ENCODE measurements at regions of chr9 and their contacts with region 1.

Region 1: GRCh38 chr9:79465156-79465555 is 106.6 kb upstream of the TLE4 start:
- DNase-seq: no peak
- ATAC-seq: no peak
- H3K4me3 ChIP-seq: no peak overlapping the region
- H3K4me3 Mint-ChIP-seq: no peak overlapping the region
- H3K27ac ChIP-seq: no peak overlapping the region
- H3K27ac Mint-ChIP-seq: no peak overlapping the region
- H3K4me1 ChIP-seq: peaks cover 8% of the 10 kb centered on the region
- H3K4me1 Mint-ChIP-seq: peaks cover 14% of the 10 kb centered on the region
- H3K27me3 ChIP-seq: no peaks in the 10 kb centered on the region
- H3K27me3 Mint-ChIP-seq: no peaks in the 10 kb centered on the region
- CTCF ChIP-seq: no peak

Region 2: GRCh38 chr9:79432485-79432884 is 32.7 kb before region 1 on chr9:
- CTCF ChIA-PET with region 1: no interaction called
- POLR2A ChIA-PET with region 1: no interaction called
- intact Hi-C with region 1: loop called in 1 of 2 experiments (anchors 5 kb)
- DNase-seq: peak in 1 of 9 experiments; percentile 11
- ATAC-seq: no peak
- H3K4me3 ChIP-seq: no peak overlapping the region
- H3K4me3 Mint-ChIP-seq: no peak overlapping the region
- H3K27ac ChIP-seq: no peak overlapping the region
- H3K27ac Mint-ChIP-seq: no peak overlapping the region
- H3K4me1 ChIP-seq: no peaks in the 10 kb centered on the region
- H3K4me1 Mint-ChIP-seq: no peaks in the 10 kb centered on the region
- H3K27me3 ChIP-seq: no peaks in the 10 kb centered on the region
- H3K27me3 Mint-ChIP-seq: no peaks in the 10 kb centered on the region
- CTCF ChIP-seq: no peak

Measured in CD8-positive, alpha-beta T cell (primary cell).